ENCODE measurements at regions of chr17 and their contacts with region 1.

Region 1: GRCh38 chr17:14926526-14927122 is 338.5 kb downstream of the PMP22 start:
- DNase-seq: peak; percentile 40
- H3K4me3 ChIP-seq: no peak overlapping the region
- H3K27ac ChIP-seq: no peak overlapping the region
- H3K4me1 ChIP-seq: no peaks in the 10 kb centered on the region
- H3K27me3 ChIP-seq: peaks cover 2% of the 10 kb centered on the region
- CTCF ChIP-seq: peak; percentile 63 to 78

Region 2: GRCh38 chr17:13594762-13595598 is 1331.6 kb before region 1 on chr17:
- CTCF ChIA-PET with region 1: no interaction called
- dilution Hi-C with region 1: no loop called
- in situ Hi-C with region 1: loop called (anchors 25 kb)
- intact Hi-C with region 1: loop called (anchors 5 kb)
- DNase-seq: peak; percentile 62
- H3K4me3 ChIP-seq: no peak overlapping the region
- H3K27ac ChIP-seq: no peak overlapping the region
- H3K4me1 ChIP-seq: peaks cover 3% of the 10 kb centered on the region
- H3K27me3 ChIP-seq: no peaks in the 10 kb centered on the region
- CTCF ChIP-seq: peak; percentile 88 to 91

Region 3: GRCh38 chr17:14575471-14575953 is 351.1 kb before region 1 on chr17:
- CTCF ChIA-PET with region 1: no interaction called
- dilution Hi-C with region 1: no loop called
- in situ Hi-C with region 1: no loop called
- intact Hi-C with region 1: loop called (anchors 10 kb)
- DNase-seq: peak; percentile 18
- H3K4me3 ChIP-seq: no peak overlapping the region
- H3K27ac ChIP-seq: no peak overlapping the region
- H3K4me1 ChIP-seq: no peaks in the 10 kb centered on the region
- H3K27me3 ChIP-seq: peaks cover 7% of the 10 kb centered on the region
- CTCF ChIP-seq: no peak

Region 4: GRCh38 chr17:14792746-14793145 is 133.9 kb before region 1 on chr17:
- CTCF ChIA-PET with region 1: no interaction called
- dilution Hi-C with region 1: no loop called
- in situ Hi-C with region 1: no loop called
- intact Hi-C with region 1: loop called (anchors 1 kb)
- DNase-seq: peak; percentile 78
- H3K4me3 ChIP-seq: no peak overlapping the region
- H3K27ac ChIP-seq: peak overlapping the region; percentile 77
- H3K4me1 ChIP-seq: peaks cover 29% of the 10 kb centered on the region
- H3K27me3 ChIP-seq: no peaks in the 10 kb centered on the region
- CTCF ChIP-seq: no peak

Region 5: DNA sequence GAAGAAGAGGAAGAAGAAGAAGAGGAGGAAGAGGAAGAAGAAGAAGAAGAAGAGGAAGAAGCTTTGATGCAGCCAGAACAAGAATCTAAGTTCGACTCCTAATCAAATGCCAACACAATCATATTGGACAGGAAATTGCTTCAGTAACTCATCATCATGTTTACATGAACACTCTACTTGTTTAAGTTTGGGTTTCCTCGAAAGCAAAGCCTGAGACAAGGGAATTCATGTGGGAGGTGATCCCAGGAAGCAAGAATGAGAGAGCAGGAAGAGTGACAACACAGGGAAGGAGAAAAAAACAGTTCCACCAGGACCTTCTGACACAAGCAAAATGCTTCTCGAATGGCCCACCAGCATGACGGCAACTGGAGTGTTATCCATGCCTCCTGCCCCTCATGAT is 59.5 kb after region 1 on chr17:
- CTCF ChIA-PET with region 1: no interaction called
- dilution Hi-C with region 1: no loop called
- in situ Hi-C with region 1: no loop called
- intact Hi-C with region 1: no loop called
- DNase-seq: no peak
- H3K4me3 ChIP-seq: no peak overlapping the region
- H3K27ac ChIP-seq: no peak overlapping the region
- H3K4me1 ChIP-seq: no peaks in the 10 kb centered on the region
- H3K27me3 ChIP-seq: no peaks in the 10 kb centered on the region
- CTCF ChIP-seq: no peak

Region 6: GRCh38 chr17:15091825-15092224 is 165.2 kb after region 1 on chr17:
- CTCF ChIA-PET with region 1: no interaction called
- dilution Hi-C with region 1: no loop called
- in situ Hi-C with region 1: no loop called
- intact Hi-C with region 1: loop called (anchors 10 kb)
- DNase-seq: peak; percentile 14
- H3K4me3 ChIP-seq: no peak overlapping the region
- H3K27ac ChIP-seq: no peak overlapping the region
- H3K4me1 ChIP-seq: no peaks in the 10 kb centered on the region
- H3K27me3 ChIP-seq: peaks cover 2% of the 10 kb centered on the region
- CTCF ChIP-seq: peak; percentile 2 to 60

Region 7: DNA sequence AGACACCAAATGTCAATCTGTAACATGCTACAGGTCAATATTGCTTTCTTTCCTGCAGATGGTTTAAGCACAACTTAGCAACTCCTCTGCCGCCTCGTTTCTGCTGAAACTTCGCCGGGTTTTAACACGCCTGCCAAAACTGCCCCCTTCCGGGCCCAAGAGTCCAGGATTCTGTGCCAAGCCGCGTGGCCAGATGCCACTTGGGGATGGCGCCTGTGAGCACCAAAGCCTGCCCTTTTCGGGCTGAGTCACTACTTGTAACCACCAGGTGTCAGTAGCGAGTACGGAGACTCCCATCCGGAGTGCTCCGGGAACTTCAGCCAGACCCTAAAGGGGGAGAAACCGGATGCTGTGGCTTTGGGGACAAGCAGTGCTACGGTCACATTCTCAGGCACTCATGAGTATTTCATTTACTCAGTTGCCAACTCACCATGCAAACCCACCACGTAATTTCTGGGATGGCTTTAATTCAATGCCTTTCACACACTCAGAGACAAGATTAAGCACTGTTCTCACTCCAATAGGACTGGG is 330.7 kb after region 1 on chr17:
- CTCF ChIA-PET with region 1: no interaction called
- dilution Hi-C with region 1: no loop called
- in situ Hi-C with region 1: no loop called
- intact Hi-C with region 1: no loop called
- DNase-seq: peak; percentile 58
- H3K4me3 ChIP-seq: no peak overlapping the region
- H3K27ac ChIP-seq: no peak overlapping the region
- H3K4me1 ChIP-seq: peaks cover 44% of the 10 kb centered on the region
- H3K27me3 ChIP-seq: no peaks in the 10 kb centered on the region
- CTCF ChIP-seq: peak; percentile 84 to 90

Region 8: GRCh38 chr17:15398736-15399331 is 472.2 kb after region 1 on chr17:
- CTCF ChIA-PET with region 1: no interaction called
- dilution Hi-C with region 1: no loop called
- in situ Hi-C with region 1: no loop called
- intact Hi-C with region 1: no loop called
- DNase-seq: peak; percentile 61
- H3K4me3 ChIP-seq: no peak overlapping the region
- H3K27ac ChIP-seq: no peak overlapping the region
- H3K4me1 ChIP-seq: peaks cover 21% of the 10 kb centered on the region
- H3K27me3 ChIP-seq: no peaks in the 10 kb centered on the region
- CTCF ChIP-seq: no peak